ENCODE measurements at regions of chr12 and their contacts with region 1.

Region 1: GRCh38 chr12:46933947-46934346 is 108.2 kb upstream of the SLC38A4 start:
- DNase-seq: peak; percentile 78
- H3K4me3 ChIP-seq: no peak overlapping the region
- H3K27ac ChIP-seq: no peak overlapping the region
- H3K4me1 ChIP-seq: peaks cover 9% of the 10 kb centered on the region; the same call in 1 of the 2 replicates
- H3K27me3 ChIP-seq: no peaks in the 10 kb centered on the region

Region 2: DNA sequence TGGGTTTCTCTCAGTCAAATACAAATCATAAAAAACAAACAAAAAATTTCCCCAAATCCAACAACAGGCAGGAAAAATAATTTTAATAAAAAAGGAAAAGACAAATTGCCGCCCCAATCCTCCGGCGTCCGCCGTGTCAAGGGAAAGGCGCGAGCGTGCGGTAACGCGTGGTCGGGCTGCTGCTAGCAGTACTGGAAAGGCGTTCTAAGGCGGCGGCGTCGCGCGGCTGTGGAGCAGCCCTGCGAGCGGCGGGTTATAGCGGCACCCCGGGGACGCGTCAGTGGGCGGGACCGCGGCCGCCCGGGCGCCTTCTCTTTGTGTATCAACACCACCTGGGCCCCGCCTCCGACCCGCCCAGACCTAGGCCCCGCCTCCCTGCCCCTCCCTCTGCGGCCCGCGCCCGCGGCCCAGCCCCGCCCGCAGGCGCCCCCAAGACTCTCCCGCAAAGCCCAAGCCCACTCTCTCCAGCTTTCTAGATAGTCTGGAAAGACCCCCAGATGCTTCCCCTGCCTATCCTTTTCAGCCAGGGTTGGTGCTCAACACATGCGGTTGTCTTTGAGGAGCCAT is 561.3 kb before region 1 on chr12 and contains the start of gene SLC38A2:
- in situ Hi-C with region 1: loop called (anchors 25 kb)
- DNase-seq: peak; percentile 99
- H3K4me3 ChIP-seq: peak within 1 kb of the TSS; percentile 99
- H3K27ac ChIP-seq: peak within 1 kb of the TSS; percentile 96
- H3K4me1 ChIP-seq: peaks cover 16% of the 10 kb centered on the region
- H3K27me3 ChIP-seq: no peaks in the 10 kb centered on the region
- total RNA-seq, gene SLC38A2: 1,383 and 1,539 TPM in 2 replicates

Region 3: DNA sequence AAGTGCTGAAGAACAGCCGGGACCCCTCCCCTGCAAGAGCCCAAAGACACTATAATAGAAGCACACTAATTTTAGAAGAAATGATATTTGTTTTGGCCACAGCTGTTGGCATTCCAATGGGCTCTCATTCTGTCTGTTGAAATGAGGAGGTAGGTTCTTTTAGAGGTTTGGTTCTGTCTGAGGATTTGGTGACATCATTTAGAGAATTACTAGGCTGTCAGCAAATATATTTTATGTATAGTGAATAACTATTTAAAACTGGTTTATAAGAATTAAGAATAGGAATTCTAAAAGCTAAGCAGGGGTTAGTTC is 360.6 kb before region 1 on chr12:
- in situ Hi-C with region 1: no loop called
- DNase-seq: peak; percentile 21
- H3K4me3 ChIP-seq: no peak overlapping the region
- H3K27ac ChIP-seq: no peak overlapping the region
- H3K4me1 ChIP-seq: peaks cover 15% of the 10 kb centered on the region
- H3K27me3 ChIP-seq: no peaks in the 10 kb centered on the region

Region 4: GRCh38 chr12:46675736-46676135 is 258.2 kb before region 1 on chr12:
- in situ Hi-C with region 1: loop called (anchors 5 kb)
- DNase-seq: peak; percentile 72
- H3K4me3 ChIP-seq: 0 out of 2 replicates have a peak overlapping the region, but pooled peaks have one; percentile 47
- H3K27ac ChIP-seq: peak overlapping the region; percentile 20
- H3K4me1 ChIP-seq: peaks cover 47% of the 10 kb centered on the region
- H3K27me3 ChIP-seq: no peaks in the 10 kb centered on the region

Measured in GM23248 (cell line).